Right ventricle myocardium superior (tissue), 1 donor: ENCODE measurements at regions of chr16 and their contacts with region 1.

Region 1: GRCh38 chr16:67816240-67817031 is 9.7 kb downstream of the TSNAXIP1 start:
- DNase-seq: peak; percentile 92
- ATAC-seq: peak; percentile 98

Region 2: GRCh38 chr16:68031951-68032350 is 215.5 kb after region 1 on chr16:
- intact Hi-C with region 1: loop called (anchors 5 kb)
- DNase-seq: no peak
- ATAC-seq: no peak